ENCODE measurements at regions of chr17 and their contacts with region 1.

Region 1: DNA sequence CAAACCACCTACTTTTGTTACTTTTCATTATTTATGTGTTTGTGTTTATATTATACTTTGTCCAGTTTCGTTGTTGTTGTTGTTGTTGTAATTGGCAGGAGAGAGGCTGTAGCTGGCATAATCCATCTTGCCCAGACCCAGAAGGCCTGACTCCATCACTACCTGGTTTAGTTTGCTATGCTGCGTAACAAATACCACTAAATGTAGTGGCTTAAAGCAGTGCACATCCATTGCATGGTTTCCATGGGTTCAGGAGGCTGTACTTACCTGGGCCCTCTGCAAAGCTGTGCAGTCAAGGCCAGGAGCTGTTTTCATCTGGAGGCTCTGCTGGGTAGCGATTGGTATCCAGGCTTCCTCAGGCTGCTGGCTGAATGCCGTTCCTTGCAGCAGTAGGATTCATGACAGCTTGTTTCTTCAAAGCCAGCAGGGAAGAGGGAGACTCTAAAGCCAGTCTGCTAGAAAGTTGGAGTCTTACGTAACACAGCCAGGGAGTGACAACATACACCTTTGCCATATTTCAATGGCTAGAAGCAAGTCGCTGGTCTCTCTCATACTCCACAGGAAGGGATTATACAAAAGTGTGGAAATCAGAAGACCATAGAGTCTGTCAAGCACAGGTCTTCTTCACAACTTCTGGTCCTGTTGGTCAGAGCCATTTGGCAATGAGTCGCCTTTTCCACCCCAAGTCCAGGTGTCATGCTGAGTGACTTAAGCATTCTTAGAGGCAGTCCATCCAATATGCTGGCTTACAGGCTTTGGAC is 41.1 kb downstream of the TNRC6C start:
- DNase-seq: no peak
- ATAC-seq: no peak
- H3K4me3 ChIP-seq: no peak overlapping the region
- H3K27ac ChIP-seq: peak overlapping the region in 1 of 2 donors; percentile 82
- H3K4me1 ChIP-seq: peaks cover 6 to 9% of the 10 kb centered on the region in 2 donors
- H3K27me3 ChIP-seq: no peaks in the 10 kb centered on the region

Region 2: GRCh38 chr17:77963441-77963840 is 36.2 kb before region 1 on chr17:
- intact Hi-C with region 1: loop called in 1 of 2 experiments (anchors 5 kb)
- DNase-seq: no peak
- ATAC-seq: no peak
- H3K4me3 ChIP-seq: no peak overlapping the region
- H3K27ac ChIP-seq: no peak overlapping the region
- H3K4me1 ChIP-seq: peaks cover 0 to 9% of the 10 kb centered on the region in 2 donors
- H3K27me3 ChIP-seq: no peaks in the 10 kb centered on the region

Measured in aorta (tissue), 5 donors.